Activated naive CD4-positive, alpha-beta T cell treated with anti-CD3 and anti-CD28 coated beads for 36 hours (primary cell): ENCODE measurements at regions of chr11 and their contacts with region 1.

Region 1: DNA sequence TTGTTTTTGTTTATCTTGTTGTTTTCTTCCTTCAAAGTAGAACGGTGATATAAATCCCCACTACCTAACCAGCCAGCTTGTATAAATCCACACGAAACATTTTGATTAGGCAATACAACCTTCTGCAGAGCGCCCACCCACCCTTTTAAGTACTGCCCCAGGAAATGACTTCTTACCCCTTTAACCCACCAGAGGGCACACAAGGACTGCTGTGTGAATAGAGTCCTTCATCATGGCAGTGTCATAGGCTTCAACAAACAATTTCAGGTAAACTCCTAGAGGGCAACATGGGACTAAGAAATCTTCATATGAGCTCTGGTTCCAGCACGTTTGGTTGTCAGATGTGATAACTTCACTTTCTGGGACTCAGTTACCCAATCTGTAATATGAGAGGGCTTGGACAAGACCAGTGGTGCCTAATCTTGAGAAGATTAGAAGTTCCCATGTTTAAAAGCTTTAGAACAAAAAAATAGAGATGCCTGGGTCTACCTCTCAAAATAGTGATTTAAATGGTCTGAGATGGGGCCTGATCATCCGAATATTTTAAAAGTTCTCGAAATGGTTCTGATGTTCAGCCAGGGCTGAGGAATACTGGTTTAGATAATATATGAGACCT is 56.1 kb downstream of the PIWIL4 start:
- DNase-seq: peak; percentile 78
- H3K4me3 Mint-ChIP-seq: no peak overlapping the region
- H3K27ac Mint-ChIP-seq: no peak overlapping the region
- H3K4me1 Mint-ChIP-seq: no peaks in the 10 kb centered on the region
- H3K27me3 Mint-ChIP-seq: peaks cover 7% of the 10 kb centered on the region

Region 2: GRCh38 chr11:94762208-94762607 is 139.0 kb after region 1 on chr11:
- CTCF ChIA-PET with region 1: interaction called, 3 read pairs
- intact Hi-C with region 1: loop called (anchors 1 kb)
- DNase-seq: peak; percentile 38
- H3K4me3 Mint-ChIP-seq: no peak overlapping the region
- H3K27ac Mint-ChIP-seq: no peak overlapping the region
- H3K4me1 Mint-ChIP-seq: no peaks in the 10 kb centered on the region
- H3K27me3 Mint-ChIP-seq: peaks cover 10% of the 10 kb centered on the region

Region 3: GRCh38 chr11:94897330-94897768 is 274.1 kb after region 1 on chr11:
- CTCF ChIA-PET with region 1: interaction called, 6 read pairs
- intact Hi-C with region 1: loop called (anchors 1 kb)
- DNase-seq: peak; percentile 62
- H3K4me3 Mint-ChIP-seq: no peak overlapping the region
- H3K27ac Mint-ChIP-seq: no peak overlapping the region
- H3K4me1 Mint-ChIP-seq: no peaks in the 10 kb centered on the region
- H3K27me3 Mint-ChIP-seq: no peaks in the 10 kb centered on the region

Region 4: DNA sequence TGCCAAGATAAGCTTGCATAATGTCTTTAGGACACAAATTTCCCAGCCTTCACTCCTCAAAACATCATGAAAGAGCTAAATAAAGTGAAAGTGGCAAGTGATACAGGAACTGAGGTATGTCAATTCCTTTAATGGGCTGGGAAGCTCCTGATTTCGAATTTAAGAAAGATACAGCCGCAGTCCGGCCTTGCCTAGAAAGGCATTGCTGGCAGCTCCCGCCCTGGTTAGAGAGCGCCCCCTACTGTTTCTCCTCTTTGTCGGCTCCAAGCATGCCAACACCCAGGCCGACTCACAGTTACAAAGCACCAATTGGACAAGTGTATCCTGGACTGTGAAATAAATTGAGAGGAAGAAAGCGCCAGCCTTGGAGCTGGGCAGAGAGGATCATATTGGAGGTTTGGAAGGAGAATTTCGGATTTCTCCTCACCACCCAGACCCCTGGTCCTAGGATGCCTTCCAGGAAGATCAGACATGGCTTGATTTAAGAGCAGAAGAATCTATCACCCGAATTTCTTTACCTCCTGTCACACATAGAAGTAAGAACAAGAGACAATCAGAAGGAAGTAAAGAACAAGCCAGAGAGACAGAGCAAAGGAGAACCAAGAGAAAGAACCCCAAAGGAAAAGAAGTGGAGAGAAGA is 1082.4 kb after region 1 on chr11:
- CTCF ChIA-PET with region 1: no interaction called
- intact Hi-C with region 1: loop called (anchors 10 kb)
- DNase-seq: peak; percentile 95
- H3K4me3 Mint-ChIP-seq: no peak overlapping the region
- H3K27ac Mint-ChIP-seq: no peak overlapping the region
- H3K4me1 Mint-ChIP-seq: peaks cover 16% of the 10 kb centered on the region
- H3K27me3 Mint-ChIP-seq: no peaks in the 10 kb centered on the region

Region 5: GRCh38 chr11:96424693-96425092 is 1801.5 kb after region 1 on chr11:
- CTCF ChIA-PET with region 1: no interaction called
- intact Hi-C with region 1: loop called (anchors 5 kb)
- DNase-seq: no peak
- H3K4me3 Mint-ChIP-seq: no peak overlapping the region
- H3K27ac Mint-ChIP-seq: no peak overlapping the region
- H3K4me1 Mint-ChIP-seq: peaks cover 4% of the 10 kb centered on the region
- H3K27me3 Mint-ChIP-seq: peaks cover 17% of the 10 kb centered on the region